Activated CD4-positive, alpha-beta T cell treated with anti-CD3 and anti-CD28 coated beads for 36 hours (primary cell): ENCODE measurements at regions of chr3 and their contacts with region 1.

Region 1: DNA sequence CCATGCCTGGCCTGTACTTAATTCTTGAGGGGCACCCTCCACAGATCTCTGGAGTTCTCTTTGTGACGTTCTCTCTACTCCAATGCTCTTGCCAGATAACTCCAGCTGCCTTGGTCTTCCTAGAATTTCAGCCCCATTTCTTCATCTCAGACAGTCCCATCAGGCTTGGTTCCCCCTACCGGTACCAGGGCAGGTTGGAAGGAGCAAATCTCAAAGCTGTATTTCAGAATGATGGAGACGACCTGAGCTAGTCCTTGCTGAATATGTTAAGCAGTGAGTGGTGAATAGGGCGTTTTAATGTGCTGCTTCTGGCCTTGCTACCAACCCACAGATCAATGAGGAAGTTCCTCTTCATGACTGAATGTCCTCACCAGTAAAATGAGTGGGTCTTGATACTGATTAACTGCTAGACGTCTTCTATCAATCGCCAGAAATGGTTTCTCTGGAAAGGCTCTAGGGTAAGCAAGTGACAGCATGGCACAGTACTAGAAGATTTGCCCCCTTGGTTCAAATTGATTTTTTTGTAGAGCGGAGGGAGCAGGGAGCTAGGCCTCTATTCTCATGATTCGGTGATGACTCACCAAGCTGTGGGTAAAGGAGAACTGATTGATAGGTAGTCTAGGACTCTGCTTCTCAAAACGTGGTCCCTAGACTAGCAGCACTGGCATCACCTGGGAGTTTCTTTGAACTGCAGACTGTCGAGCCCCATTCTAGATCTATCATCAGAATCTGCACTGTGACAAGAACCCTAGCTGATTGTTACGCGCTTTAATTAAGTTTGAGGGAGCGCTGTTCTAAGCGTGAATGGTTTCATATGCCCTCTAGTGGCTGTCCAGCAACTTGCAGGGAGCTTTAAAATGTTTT is 67.8 kb downstream of the UBP1 start:
- DNase-seq: peak; percentile 62
- ATAC-seq: peak; percentile 98
- H3K4me3 Mint-ChIP-seq: no peak overlapping the region
- H3K27ac Mint-ChIP-seq: no peak overlapping the region
- H3K4me1 Mint-ChIP-seq: peaks cover 11% of the 10 kb centered on the region
- H3K27me3 Mint-ChIP-seq: peaks cover 13% of the 10 kb centered on the region

Region 2: GRCh38 chr3:33047842-33048834 is 324.3 kb before region 1 on chr3:
- CTCF ChIA-PET with region 1: no interaction called
- POLR2A ChIA-PET with region 1: no interaction called
- intact Hi-C with region 1: no loop called
- DNase-seq: peak; percentile 65
- ATAC-seq: peak; percentile 84
- H3K4me3 Mint-ChIP-seq: peak overlapping the region; percentile 29
- H3K27ac Mint-ChIP-seq: peak overlapping the region; percentile 94
- H3K4me1 Mint-ChIP-seq: peaks cover 74% of the 10 kb centered on the region
- H3K27me3 Mint-ChIP-seq: no peaks in the 10 kb centered on the region

Region 3: GRCh38 chr3:33360136-33360825 is 12.2 kb before region 1 on chr3:
- CTCF ChIA-PET with region 1: interaction called, 25 read pairs
- POLR2A ChIA-PET with region 1: no interaction called
- intact Hi-C with region 1: no loop called
- DNase-seq: no peak
- ATAC-seq: no peak
- H3K4me3 Mint-ChIP-seq: no peak overlapping the region
- H3K27ac Mint-ChIP-seq: no peak overlapping the region
- H3K4me1 Mint-ChIP-seq: peaks cover 2% of the 10 kb centered on the region
- H3K27me3 Mint-ChIP-seq: peaks cover 3% of the 10 kb centered on the region

Region 4: DNA sequence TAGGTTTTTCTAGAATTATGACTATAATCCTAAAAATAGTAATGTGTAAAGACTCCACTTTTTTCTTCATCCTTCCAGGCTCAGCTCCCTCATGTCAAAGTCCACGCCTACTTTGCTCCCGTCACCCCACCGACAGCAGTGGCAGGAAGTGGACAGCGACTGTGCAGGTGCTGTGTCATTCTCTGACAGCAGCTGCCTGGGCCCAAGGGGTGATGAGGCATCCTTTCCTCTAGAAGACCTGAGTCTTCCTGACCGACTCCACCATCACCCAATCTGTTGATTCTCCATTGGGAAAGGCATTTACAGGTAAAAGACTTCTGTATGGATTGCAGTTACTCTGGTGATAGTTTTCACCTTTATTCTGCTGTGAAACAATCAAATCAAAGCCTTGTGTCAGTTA is 13.0 kb after region 1 on chr3:
- CTCF ChIA-PET with region 1: interaction called, 27 read pairs
- POLR2A ChIA-PET with region 1: no interaction called
- intact Hi-C with region 1: no loop called
- DNase-seq: peak; percentile 77
- ATAC-seq: peak; percentile 93
- H3K4me3 Mint-ChIP-seq: no peak overlapping the region
- H3K27ac Mint-ChIP-seq: peak overlapping the region; percentile 35
- H3K4me1 Mint-ChIP-seq: peaks cover 16% of the 10 kb centered on the region
- H3K27me3 Mint-ChIP-seq: no peaks in the 10 kb centered on the region

Region 5: GRCh38 chr3:33392703-33393125 is 20.3 kb after region 1 on chr3:
- CTCF ChIA-PET with region 1: interaction called, 10 read pairs
- POLR2A ChIA-PET with region 1: no interaction called
- intact Hi-C with region 1: no loop called
- DNase-seq: no peak
- ATAC-seq: no peak
- H3K4me3 Mint-ChIP-seq: no peak overlapping the region
- H3K27ac Mint-ChIP-seq: no peak overlapping the region
- H3K4me1 Mint-ChIP-seq: peaks cover 17% of the 10 kb centered on the region
- H3K27me3 Mint-ChIP-seq: no peaks in the 10 kb centered on the region

Region 6: GRCh38 chr3:33787328-33788009 is 415.0 kb after region 1 on chr3:
- CTCF ChIA-PET with region 1: interaction called, 9 read pairs
- POLR2A ChIA-PET with region 1: no interaction called
- intact Hi-C with region 1: loop called in 1 of 2 experiments (anchors 1 kb)
- DNase-seq: peak; percentile 72
- ATAC-seq: peak; percentile 87
- H3K4me3 Mint-ChIP-seq: peak overlapping the region; percentile 36
- H3K27ac Mint-ChIP-seq: no peak overlapping the region
- H3K4me1 Mint-ChIP-seq: peaks cover 7% of the 10 kb centered on the region
- H3K27me3 Mint-ChIP-seq: peaks cover 6% of the 10 kb centered on the region

Region 7: DNA sequence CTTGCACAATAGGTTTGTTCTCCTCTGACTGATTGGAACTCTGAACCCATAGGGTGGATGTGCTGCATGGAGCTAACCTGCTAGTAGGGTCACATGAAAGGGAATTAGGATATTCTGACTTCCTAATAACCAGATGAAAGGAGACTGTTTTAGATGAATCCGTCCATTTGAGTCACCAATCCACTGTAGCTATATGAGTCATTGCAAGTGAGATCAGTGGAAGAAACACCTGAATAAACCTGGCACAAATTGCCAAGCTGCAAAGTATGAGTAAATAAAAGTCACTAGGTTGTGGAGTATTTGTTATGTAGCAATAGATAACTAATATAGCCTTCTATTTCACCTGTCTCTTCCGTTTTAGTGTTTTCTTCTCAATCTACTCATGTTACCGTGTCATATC is 1010.4 kb after region 1 on chr3:
- CTCF ChIA-PET with region 1: no interaction called
- POLR2A ChIA-PET with region 1: no interaction called
- intact Hi-C with region 1: no loop called
- DNase-seq: no peak
- ATAC-seq: no peak
- H3K4me3 Mint-ChIP-seq: no peak overlapping the region
- H3K27ac Mint-ChIP-seq: no peak overlapping the region
- H3K4me1 Mint-ChIP-seq: no peaks in the 10 kb centered on the region
- H3K27me3 Mint-ChIP-seq: no peaks in the 10 kb centered on the region